Activated B cell treated with CpG ODN at 0.5 μM for 24 hours (primary cell): ENCODE measurements at regions of chr16 and their contacts with region 1.

Region 1: GRCh38 chr16:88442727-88443576 is 10.1 kb upstream of the ZFPM1 start:
- DNase-seq: peak; percentile 83
- ATAC-seq: peak; percentile 89
- H3K4me3 Mint-ChIP-seq: no peak overlapping the region
- H3K27ac Mint-ChIP-seq: peak overlapping the region; percentile 12
- H3K4me1 Mint-ChIP-seq: peaks cover 5% of the 10 kb centered on the region
- H3K27me3 Mint-ChIP-seq: no peaks in the 10 kb centered on the region
- CTCF ChIP-seq: peak; percentile 57

Region 2: DNA sequence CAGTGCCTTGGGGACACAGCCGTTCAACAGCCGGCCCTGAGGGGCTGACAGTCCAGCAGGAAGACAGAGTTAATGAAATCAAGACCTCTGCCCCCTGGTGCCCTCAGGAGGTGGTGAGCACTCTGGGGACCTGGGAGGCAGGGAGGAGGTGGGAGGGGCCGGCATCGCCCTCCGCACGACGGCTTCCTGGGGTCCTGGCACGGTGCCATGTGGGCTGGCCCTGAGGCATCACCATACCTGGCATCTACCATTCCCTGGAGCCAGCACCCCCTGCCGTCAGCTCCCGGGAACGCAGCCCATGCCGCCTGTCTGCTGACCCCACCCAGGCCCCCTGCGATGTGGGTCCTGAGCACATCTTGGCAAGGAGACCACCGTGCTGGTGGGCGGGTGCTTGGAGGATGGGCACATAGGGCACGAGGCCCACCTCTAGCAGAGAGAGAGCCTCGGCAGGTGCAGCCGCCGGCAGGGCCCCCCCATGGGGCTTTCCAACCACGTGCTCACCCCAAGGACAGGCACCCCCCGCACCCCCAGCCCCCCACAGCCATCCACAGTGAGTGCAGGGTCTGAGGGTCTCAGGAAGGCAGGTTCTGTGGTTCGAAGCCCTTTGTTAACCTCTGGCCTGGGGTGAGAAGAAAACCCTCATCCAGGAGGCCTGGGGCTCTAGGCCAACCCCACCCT is 62.6 kb after region 1 on chr16:
- CTCF ChIA-PET with region 1: no interaction called
- POLR2A ChIA-PET with region 1: no interaction called
- intact Hi-C with region 1: no loop called
- DNase-seq: no peak
- ATAC-seq: peak; percentile 42
- H3K4me3 Mint-ChIP-seq: no peak overlapping the region
- H3K27ac Mint-ChIP-seq: no peak overlapping the region
- H3K4me1 Mint-ChIP-seq: no peaks in the 10 kb centered on the region
- H3K27me3 Mint-ChIP-seq: no peaks in the 10 kb centered on the region
- CTCF ChIP-seq: no peak

Region 3: GRCh38 chr16:88527186-88527936 is 84.4 kb after region 1 on chr16:
- CTCF ChIA-PET with region 1: interaction called, 5 read pairs
- POLR2A ChIA-PET with region 1: no interaction called
- intact Hi-C with region 1: loop called (anchors 1 kb)
- DNase-seq: peak; percentile 73
- ATAC-seq: peak; percentile 87
- H3K4me3 Mint-ChIP-seq: no peak overlapping the region
- H3K27ac Mint-ChIP-seq: no peak overlapping the region
- H3K4me1 Mint-ChIP-seq: peaks cover 5% of the 10 kb centered on the region
- H3K27me3 Mint-ChIP-seq: no peaks in the 10 kb centered on the region
- CTCF ChIP-seq: peak; percentile 23

Region 4: DNA sequence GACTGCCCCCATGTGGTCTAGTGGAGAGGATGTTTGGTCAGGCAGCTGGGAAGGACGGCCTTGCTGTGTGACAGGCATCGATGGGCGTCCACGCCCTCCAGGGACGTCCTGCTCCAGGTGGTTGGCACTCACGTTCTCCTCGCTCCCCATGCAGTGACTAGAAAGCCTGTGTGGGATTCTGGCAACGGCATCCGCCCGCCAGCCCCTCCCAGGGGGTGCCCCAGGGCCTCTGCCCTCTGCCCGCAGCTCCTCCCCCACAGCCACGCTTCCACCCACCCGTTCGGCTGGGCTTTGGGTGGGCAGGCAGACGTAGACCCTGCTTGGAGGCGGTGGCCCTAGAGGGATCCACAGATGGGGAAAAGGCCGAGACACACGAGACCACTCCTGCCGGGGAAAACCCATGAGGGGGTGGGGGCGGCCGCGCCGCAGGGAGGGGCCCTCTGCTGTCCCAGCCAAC is 190.8 kb after region 1 on chr16:
- CTCF ChIA-PET with region 1: no interaction called
- POLR2A ChIA-PET with region 1: no interaction called
- intact Hi-C with region 1: no loop called
- DNase-seq: peak; percentile 64
- ATAC-seq: peak; percentile 54
- H3K4me3 Mint-ChIP-seq: peak overlapping the region; percentile 76
- H3K27ac Mint-ChIP-seq: peak overlapping the region; percentile 71
- H3K4me1 Mint-ChIP-seq: peaks cover 46% of the 10 kb centered on the region
- H3K27me3 Mint-ChIP-seq: no peaks in the 10 kb centered on the region
- CTCF ChIP-seq: no peak

Region 5: GRCh38 chr16:89749647-89750046 is 1306.7 kb after region 1 on chr16:
- CTCF ChIA-PET with region 1: no interaction called
- POLR2A ChIA-PET with region 1: no interaction called
- intact Hi-C with region 1: no loop called
- DNase-seq: no peak
- ATAC-seq: no peak
- H3K4me3 Mint-ChIP-seq: no peak overlapping the region
- H3K27ac Mint-ChIP-seq: no peak overlapping the region
- H3K4me1 Mint-ChIP-seq: peaks cover 8% of the 10 kb centered on the region
- H3K27me3 Mint-ChIP-seq: no peaks in the 10 kb centered on the region
- CTCF ChIP-seq: no peak